A673 (cell line): ENCODE measurements at regions of chr7 and their contacts with region 1.

Region 1: GRCh38 chr7:32204361-32205018 is 134.3 kb upstream of the PDE1C start:
- DNase-seq: peak; percentile 82
- H3K4me3 ChIP-seq: peak overlapping the region; percentile 27
- H3K27ac ChIP-seq: no peak overlapping the region
- H3K4me1 ChIP-seq: no peaks in the 10 kb centered on the region
- H3K27me3 ChIP-seq: peaks cover 34% of the 10 kb centered on the region
- CTCF ChIP-seq: peak; percentile 74

Region 2: DNA sequence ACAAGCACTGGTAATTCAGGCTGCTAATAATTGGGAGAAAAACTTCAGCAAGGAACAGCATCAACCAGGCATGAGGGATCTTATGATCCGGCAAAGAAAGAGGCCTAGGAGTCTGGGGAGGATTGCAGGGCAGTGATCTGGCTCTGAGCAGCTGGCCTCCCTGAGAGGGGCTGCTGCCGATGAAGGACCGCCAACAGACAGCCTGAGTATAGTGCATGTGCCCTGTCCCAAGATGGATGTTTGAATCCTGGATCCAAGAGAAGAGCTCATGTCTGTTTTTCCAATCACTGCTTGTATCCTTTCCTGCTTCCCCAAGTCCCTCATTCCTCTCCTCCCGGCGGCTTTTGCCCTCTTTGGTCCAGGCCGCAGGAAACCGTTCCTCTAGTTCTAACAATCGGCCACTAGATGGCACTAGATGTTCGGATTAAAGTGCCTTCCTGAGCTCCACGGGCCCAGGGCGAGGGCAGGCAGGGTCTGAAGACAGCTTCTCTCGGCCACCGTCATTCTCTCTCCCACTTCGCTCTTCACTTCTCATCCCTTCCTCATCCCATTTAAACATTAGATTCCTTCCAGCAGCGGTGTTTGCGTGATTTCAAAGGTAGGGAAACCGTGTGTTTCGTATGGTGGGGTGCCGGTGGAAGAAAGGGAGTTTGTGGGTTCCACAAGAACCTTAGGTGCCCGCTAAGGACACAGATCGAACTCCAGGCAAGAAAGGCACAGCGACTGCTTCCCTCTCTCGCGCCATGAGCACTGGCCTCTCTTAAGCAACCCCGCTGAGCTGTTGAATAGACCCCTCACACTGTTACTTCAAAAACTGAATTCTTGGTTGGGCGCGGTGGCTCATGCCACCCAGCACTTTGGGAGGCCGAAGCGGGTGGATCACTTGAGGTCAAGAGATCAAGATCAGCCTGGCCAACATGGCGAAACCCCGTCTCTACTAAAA is 1070.0 kb before region 1 on chr7:
- CTCF ChIA-PET with region 1: interaction called, 3 read pairs
- POLR2A ChIA-PET with region 1: no interaction called
- intact Hi-C with region 1: loop called (anchors 5 kb)
- DNase-seq: peak; percentile 91
- H3K4me3 ChIP-seq: no peak overlapping the region
- H3K27ac ChIP-seq: no peak overlapping the region
- H3K4me1 ChIP-seq: no peaks in the 10 kb centered on the region
- H3K27me3 ChIP-seq: no peaks in the 10 kb centered on the region
- CTCF ChIP-seq: peak; percentile 75

Region 3: GRCh38 chr7:31648288-31648687 is 556.2 kb before region 1 on chr7:
- CTCF ChIA-PET with region 1: no interaction called
- POLR2A ChIA-PET with region 1: no interaction called
- intact Hi-C with region 1: loop called (anchors 10 kb)
- DNase-seq: peak; percentile 35
- H3K4me3 ChIP-seq: no peak overlapping the region
- H3K27ac ChIP-seq: no peak overlapping the region
- H3K4me1 ChIP-seq: no peaks in the 10 kb centered on the region
- H3K27me3 ChIP-seq: no peaks in the 10 kb centered on the region
- CTCF ChIP-seq: peak; percentile 46

Region 4: DNA sequence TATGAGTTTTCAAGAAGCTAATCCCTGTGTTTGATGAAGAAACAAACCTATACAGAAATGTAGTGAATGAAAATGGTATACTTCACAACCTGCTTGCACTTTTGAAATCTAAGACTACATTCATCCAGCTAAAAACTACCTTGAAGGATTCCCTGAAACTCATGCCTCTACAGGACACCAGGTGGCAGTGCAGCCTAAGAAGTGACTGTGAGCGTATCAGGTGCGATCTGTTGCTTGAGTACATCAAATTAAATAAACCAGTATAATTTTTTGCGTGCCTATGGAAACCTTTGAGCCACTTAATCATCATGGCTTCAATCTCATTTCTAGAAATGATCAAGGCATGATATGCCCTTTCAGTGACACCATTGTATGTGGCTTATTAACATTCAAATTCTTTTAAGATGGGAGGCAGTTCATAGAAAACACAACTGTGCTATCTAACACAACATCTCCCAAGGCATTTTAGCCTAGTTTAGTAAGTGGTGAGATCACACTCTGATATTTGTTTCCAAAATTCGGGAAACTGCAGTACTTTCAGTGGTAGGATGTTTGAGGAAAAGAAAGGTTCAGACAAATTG is 460.1 kb before region 1 on chr7:
- CTCF ChIA-PET with region 1: interaction called, 16 read pairs
- POLR2A ChIA-PET with region 1: no interaction called
- intact Hi-C with region 1: loop called (anchors 1 kb)
- DNase-seq: peak; percentile 75
- H3K4me3 ChIP-seq: no peak overlapping the region
- H3K27ac ChIP-seq: no peak overlapping the region
- H3K4me1 ChIP-seq: no peaks in the 10 kb centered on the region
- H3K27me3 ChIP-seq: peaks cover 13% of the 10 kb centered on the region
- CTCF ChIP-seq: peak; percentile 88

Region 5: DNA sequence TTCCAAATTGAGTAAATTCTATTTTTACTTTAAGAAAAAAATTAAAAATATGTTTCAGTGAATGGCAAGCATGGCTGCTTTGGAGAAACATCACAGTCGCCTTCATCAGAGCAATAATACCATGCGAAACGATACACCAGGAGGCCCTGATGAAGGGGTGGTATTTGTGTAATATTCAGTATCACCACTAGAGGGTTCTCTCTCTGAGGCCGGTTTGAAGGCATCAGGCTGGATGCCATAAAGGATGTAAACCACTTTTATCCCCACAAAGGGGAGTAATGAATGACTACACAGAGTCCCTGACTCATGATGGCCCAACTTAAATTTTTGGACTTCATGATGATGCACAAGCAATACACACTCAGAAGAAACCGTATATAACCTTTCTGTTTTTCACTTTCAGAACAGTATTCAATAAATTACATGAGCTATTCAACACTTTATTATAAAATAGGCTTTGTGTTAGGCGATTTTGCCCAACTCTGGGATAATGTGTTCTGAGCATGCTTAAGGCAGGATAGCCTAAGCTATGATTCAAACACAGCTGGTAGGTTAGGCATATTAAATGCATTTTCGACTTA is 422.0 kb before region 1 on chr7:
- CTCF ChIA-PET with region 1: no interaction called
- POLR2A ChIA-PET with region 1: no interaction called
- intact Hi-C with region 1: loop called (anchors 1 kb)
- DNase-seq: peak; percentile 79
- H3K4me3 ChIP-seq: no peak overlapping the region
- H3K27ac ChIP-seq: no peak overlapping the region
- H3K4me1 ChIP-seq: no peaks in the 10 kb centered on the region
- H3K27me3 ChIP-seq: peaks cover 36% of the 10 kb centered on the region
- CTCF ChIP-seq: peak; percentile 78